Activated B cell treated with CpG ODN at 0.5 μM for 24 hours (primary cell): ENCODE measurements at regions of chr19 and their contacts with region 1.

Region 1: GRCh38 chr19:35154525-35155406 is at the start of gene FXYD5:
- DNase-seq: peak; percentile 55
- ATAC-seq: peak; percentile 77
- H3K4me3 Mint-ChIP-seq: peak within 1 kb of the TSS; percentile 99
- H3K27ac Mint-ChIP-seq: peak within 1 kb of the TSS; percentile 94
- H3K4me1 Mint-ChIP-seq: peaks cover 49% of the 10 kb centered on the region
- H3K27me3 Mint-ChIP-seq: no peaks in the 10 kb centered on the region
- CTCF ChIP-seq: no peak
- total RNA-seq, gene FXYD5: 103 and 125 TPM in 2 replicates

Region 2: DNA sequence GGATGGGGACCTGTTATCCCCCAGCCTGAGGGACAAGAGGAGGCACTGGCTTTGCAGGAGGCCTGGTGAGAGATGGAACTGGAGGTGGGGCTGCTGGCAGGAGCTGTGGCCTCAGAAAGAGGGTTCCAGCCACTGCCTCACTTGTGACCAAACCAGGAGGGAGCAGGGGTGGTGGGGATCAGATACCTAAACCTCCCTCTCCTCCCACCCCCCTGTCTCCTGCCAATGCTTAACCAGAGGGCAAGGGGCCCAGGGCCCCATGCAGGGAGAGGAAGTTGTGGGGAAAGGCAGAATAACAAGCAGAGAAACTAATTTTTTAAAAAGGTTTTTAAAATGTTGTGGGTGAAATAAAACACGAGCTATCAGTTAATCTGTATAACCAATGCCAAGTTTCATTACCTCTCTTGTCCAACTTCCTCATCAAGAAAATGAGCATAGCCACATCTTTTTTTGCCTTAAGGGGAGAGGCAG is 12.5 kb after region 1 on chr19:
- CTCF ChIA-PET with region 1: no interaction called
- POLR2A ChIA-PET with region 1: interaction called, 18 read pairs
- intact Hi-C with region 1: loop called (anchors 2 kb)
- DNase-seq: no peak
- ATAC-seq: peak; percentile 31
- H3K4me3 Mint-ChIP-seq: peak overlapping the region; percentile 12
- H3K27ac Mint-ChIP-seq: peak overlapping the region; percentile 88
- H3K4me1 Mint-ChIP-seq: peaks cover 34% of the 10 kb centered on the region
- H3K27me3 Mint-ChIP-seq: no peaks in the 10 kb centered on the region
- CTCF ChIP-seq: no peak

Region 3: DNA sequence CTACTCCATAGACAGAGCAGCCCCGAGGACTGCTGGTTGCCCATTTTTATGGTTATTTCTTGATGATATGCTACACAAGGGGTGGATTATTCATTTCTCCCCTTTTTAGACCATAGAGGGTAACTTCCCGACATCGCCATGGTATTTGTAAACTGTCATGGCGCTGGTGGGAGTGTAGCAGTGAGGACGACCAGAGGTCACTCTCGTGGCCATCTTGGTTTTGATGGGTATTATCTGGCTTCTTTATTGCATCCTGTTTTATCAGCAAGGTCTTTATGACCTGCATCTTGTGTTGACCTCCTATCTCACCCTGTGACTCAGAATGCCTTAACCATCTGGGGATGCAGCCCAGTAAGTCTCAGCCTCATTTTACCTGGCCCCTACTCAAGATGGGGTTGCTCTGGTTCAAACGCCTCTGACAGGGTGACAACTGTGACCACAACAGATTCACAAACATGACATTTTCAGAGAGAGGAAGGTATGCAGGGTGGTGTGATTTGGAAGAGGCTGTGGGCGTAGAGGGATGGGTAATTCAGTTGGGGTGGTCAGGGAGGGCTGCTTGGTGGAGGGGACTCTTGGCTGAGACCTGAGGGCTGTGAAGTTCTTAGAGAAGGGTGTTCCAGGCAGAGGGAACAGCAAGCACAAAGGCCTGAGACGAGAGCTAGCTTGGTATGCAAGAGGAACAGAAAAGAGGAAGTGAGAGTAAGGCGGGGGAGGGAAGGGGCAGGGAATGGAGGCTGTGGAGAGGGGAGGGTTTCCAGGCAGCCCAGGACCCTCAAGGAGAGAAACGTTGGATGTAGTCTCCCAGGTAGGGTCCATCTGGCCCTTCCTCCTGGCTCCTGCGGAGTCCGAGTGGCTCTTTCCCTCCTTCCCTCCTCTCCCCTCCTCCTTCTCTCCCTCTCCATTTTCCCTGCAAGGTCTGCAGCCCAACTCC is 50.3 kb after region 1 on chr19:
- CTCF ChIA-PET with region 1: interaction called, 3 read pairs
- POLR2A ChIA-PET with region 1: interaction called, 33 read pairs
- intact Hi-C with region 1: loop called (anchors 2 kb)
- DNase-seq: peak; percentile 52
- ATAC-seq: peak; percentile 75
- H3K4me3 Mint-ChIP-seq: peak overlapping the region; percentile 68
- H3K27ac Mint-ChIP-seq: peak overlapping the region; percentile 98
- H3K4me1 Mint-ChIP-seq: peaks cover 78% of the 10 kb centered on the region
- H3K27me3 Mint-ChIP-seq: no peaks in the 10 kb centered on the region
- CTCF ChIP-seq: no peak

Region 4: DNA sequence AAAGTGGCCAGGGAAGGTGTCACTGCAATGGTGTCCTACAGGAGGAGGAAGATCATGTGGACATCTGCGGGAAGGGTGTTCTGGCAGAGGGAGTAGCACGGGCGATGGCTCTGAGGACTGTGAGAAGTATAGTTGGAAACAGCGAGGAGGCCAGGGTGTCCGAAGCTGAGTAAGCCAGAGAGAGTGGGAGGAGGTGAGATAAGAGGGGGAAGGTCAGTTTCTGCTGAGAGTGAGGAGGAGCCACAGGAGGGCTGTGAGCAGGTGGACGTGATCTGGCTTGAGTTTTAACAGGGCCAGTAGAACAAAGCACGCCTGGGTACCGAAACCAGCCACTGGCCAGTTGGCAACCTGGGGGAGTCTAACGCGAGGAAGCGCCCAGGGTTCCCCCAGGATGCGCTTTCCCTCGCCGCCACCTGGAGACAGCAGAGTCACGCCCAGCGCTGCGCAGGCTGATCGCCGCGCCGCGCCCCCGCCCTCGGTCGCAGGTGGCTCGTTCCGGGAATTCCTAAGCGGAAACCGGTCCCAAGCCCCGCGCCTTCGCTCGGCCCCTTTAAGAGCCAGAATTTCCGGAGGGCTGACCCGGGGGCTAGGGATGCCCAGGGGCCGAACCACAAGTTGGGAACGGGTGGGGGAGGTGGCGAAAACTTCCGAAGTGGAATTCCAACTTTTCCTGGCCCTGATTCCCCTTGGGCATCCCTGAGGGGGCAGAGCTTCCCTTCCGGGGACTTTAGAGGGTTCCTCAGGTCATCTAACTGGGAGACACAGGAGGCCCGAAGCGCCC is 93.0 kb after region 1 on chr19:
- CTCF ChIA-PET with region 1: no interaction called
- POLR2A ChIA-PET with region 1: interaction called, 4 read pairs
- intact Hi-C with region 1: loop called (anchors 1 kb)
- DNase-seq: peak; percentile 59
- ATAC-seq: peak; percentile 52
- H3K4me3 Mint-ChIP-seq: peak overlapping the region; percentile 91
- H3K27ac Mint-ChIP-seq: peak overlapping the region; percentile 93
- H3K4me1 Mint-ChIP-seq: peaks cover 31% of the 10 kb centered on the region
- H3K27me3 Mint-ChIP-seq: peaks cover 2% of the 10 kb centered on the region
- CTCF ChIP-seq: no peak